H1 (cell line): ENCODE measurements at regions of chr5 and their contacts with region 1.

Region 1: GRCh38 chr5:151239237-151239861 is 13.6 kb upstream of the GM2A start:
- DNase-seq: peak in 1 of 2 experiments; percentile 89
- H3K4me3 ChIP-seq: no peak overlapping the region
- H3K27ac ChIP-seq: no peak overlapping the region
- H3K4me1 ChIP-seq: peaks cover 3 to 11% (median 7%) of the 10 kb centered on the region in 4 experiments; a peak in 6 of 7 replicates
- H3K27me3 ChIP-seq: no peaks in the 10 kb centered on the region
- CTCF ChIP-seq: peak; percentile 86 to 94 (median 87)
- EP300 ChIP-seq: no peak
- POLR2A ChIP-seq: no peak
- RAD21 ChIP-seq: peak; percentile 82 to 89

Region 2: GRCh38 chr5:151191659-151192058 is 47.7 kb before region 1 on chr5:
- CTCF ChIA-PET with region 1: interaction called, 15 read pairs
- POLR2A ChIA-PET with region 1: no interaction called
- DNase-seq: no peak
- H3K4me3 ChIP-seq: no peak overlapping the region
- H3K27ac ChIP-seq: no peak overlapping the region
- H3K4me1 ChIP-seq: no peaks in the 10 kb centered on the region; a peak in 2 of 7 replicates
- H3K27me3 ChIP-seq: no peaks in the 10 kb centered on the region
- CTCF ChIP-seq: no peak
- EP300 ChIP-seq: no peak
- POLR2A ChIP-seq: no peak
- RAD21 ChIP-seq: no peak

Region 3: DNA sequence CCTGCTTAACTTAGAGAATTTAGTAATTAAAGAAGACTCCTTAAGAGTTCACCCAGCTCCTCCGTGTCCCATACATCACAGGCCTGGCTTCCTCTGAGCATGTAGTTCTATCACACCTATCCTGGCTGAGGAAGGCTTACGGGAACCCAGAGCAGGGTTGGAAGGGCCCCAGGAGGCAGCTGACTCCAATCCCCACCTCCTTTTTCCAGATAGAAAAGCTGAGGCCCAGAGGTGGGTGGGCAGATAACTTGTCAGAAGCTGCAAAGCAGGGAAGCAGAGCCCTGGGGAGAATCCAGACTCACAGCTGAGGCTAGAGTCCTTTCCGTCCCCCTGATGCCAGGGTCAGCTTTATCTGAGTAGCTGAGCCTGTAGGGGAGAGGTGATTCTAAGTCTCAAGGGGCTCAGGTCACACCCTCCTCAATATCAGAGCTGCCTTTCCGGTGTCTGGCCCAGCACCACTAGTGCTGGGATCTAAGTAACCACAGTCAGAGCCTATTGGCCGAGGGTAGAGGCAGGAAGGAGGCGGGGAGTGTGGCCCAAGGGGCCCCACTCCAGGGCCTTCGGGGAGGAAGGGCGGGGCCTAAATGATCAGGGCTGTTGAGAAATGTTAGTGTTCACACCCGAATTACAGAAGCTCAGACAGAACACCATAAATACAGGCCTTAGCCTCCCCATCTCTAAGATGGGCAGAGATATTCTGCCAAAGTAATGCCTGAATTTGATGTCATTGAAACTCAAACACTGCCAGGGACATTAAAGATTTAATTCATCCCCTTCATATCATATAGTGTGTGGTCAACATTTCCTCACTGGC is 25.3 kb before region 1 on chr5:
- CTCF ChIA-PET with region 1: interaction called, 17 read pairs
- POLR2A ChIA-PET with region 1: no interaction called
- DNase-seq: peak in 1 of 2 experiments; percentile 58
- H3K4me3 ChIP-seq: no peak overlapping the region
- H3K27ac ChIP-seq: no peak overlapping the region
- H3K4me1 ChIP-seq: peaks cover 0 to 3% (median under 1%) of the 10 kb centered on the region in 4 experiments; a peak in 4 of 7 replicates
- H3K27me3 ChIP-seq: no peaks in the 10 kb centered on the region
- CTCF ChIP-seq: no peak
- EP300 ChIP-seq: no peak
- POLR2A ChIP-seq: peak in 1 of 2 experiments; percentile 38; a peak in 1 of 3 replicates
- RAD21 ChIP-seq: no peak

Region 4: DNA sequence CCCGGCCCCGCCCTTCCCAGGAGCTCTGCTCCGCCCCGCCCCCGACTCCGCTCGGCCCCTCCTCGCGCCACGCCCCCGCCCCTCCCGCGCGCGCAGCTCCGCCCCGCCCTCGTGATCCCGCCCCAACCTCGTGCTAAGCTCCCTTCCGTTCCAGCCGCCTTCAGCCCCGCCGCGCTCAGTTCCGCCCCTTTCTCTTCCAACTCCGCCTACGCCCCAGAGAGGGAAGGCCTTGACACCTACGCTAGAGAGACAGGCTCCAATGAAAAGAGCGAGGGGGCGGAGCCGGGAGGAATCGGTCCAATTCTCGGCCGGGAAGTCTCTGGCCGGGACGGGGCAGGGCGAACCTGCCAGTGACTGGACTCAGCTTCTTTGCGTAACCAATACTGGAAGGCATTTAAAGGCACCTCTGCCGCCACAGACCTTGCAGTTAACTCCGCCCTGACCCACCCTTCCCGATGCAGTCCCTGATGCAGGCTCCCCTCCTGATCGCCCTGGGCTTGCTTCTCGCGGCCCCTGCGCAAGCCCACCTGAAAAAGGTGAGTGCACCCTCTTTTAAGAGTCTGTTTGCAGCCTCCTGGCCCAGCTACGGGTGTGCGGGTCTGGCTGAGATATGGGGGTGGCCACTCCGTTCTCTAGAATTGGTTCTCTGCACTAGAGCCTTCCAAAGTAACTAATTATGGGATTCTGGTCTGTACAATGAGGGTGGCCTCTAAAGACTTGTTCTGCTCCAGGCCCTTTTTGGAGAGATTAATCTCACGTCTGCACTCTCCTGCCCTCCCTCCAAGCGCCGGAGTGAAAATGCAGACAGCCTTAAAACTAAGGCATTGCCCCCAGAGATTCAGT is 13.6 kb after region 1 on chr5 and contains the start of gene GM2A:
- CTCF ChIA-PET with region 1: interaction called, 36 read pairs
- POLR2A ChIA-PET with region 1: interaction called, 12 read pairs
- DNase-seq: peak; percentile 97 to 98
- H3K4me3 ChIP-seq: peak within 1 kb of the TSS; percentile 72 to 84 (median 74)
- H3K27ac ChIP-seq: peak within 1 kb of the TSS; percentile 51; the same call in 1 of the 2 replicates
- H3K4me1 ChIP-seq: peaks cover 0 to 11% (median 4%) of the 10 kb centered on the region in 4 experiments
- H3K27me3 ChIP-seq: no peaks in the 10 kb centered on the region
- CTCF ChIP-seq: no peak
- EP300 ChIP-seq: no peak
- POLR2A ChIP-seq: peak in 1 of 2 experiments; percentile 92; a peak in 2 of 3 replicates
- RAD21 ChIP-seq: no peak; a peak in 1 of 4 replicates
- total RNA-seq, gene GM2A: 30.4 and 32.2 TPM in 2 replicates

Region 5: GRCh38 chr5:151328734-151329133 is 89.4 kb after region 1 on chr5:
- CTCF ChIA-PET with region 1: no interaction called
- POLR2A ChIA-PET with region 1: no interaction called
- DNase-seq: no peak
- H3K4me3 ChIP-seq: no peak overlapping the region
- H3K27ac ChIP-seq: no peak overlapping the region
- H3K4me1 ChIP-seq: peaks cover 0 to 4% (median 2%) of the 10 kb centered on the region in 4 experiments; a peak in 2 of 7 replicates
- H3K27me3 ChIP-seq: no peaks in the 10 kb centered on the region
- CTCF ChIP-seq: no peak
- EP300 ChIP-seq: no peak
- POLR2A ChIP-seq: no peak
- RAD21 ChIP-seq: no peak

Region 6: DNA sequence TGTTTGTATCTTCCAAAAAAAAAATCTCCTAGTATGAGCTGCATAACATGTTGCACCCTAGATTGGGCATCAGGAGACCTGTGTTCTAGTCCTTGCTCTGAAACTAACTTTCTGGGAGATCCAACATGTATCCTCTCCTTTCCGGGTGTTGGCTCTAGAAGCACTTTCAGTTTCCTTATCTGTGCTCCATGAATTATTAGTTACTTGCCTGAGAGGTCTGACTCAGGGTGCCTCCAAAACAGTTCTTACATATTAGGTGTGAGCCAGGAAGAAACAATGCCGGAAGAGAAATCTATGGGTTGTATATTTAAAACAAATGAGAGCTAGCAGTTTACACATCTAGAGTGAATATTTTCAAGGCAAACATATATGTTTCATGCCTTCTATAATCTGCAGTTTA is 144.8 kb after region 1 on chr5:
- CTCF ChIA-PET with region 1: no interaction called
- POLR2A ChIA-PET with region 1: no interaction called
- DNase-seq: no peak
- H3K4me3 ChIP-seq: no peak overlapping the region
- H3K27ac ChIP-seq: no peak overlapping the region
- H3K4me1 ChIP-seq: peaks cover 5 to 22% (median 18%) of the 10 kb centered on the region in 4 experiments
- H3K27me3 ChIP-seq: no peaks in the 10 kb centered on the region
- CTCF ChIP-seq: no peak
- EP300 ChIP-seq: no peak
- POLR2A ChIP-seq: no peak
- RAD21 ChIP-seq: no peak

Region 7: DNA sequence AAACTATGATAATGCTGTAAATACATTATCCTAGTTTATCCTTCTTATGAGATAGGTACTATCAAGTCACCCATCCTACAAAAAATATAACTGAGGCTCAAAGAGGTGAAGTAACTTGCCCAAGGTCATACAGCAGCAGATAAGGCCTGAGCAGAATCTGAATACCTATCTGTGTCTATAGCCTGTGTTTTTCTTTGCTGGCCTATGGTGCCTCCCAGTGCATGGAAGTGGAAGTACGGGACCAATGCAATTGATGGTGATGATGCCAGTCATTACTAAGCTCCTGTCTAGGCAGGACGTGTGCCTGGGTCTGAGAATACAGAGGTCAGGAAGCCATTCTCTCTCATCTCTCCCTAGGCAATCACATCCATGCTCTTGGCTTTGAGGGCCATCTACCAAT is 284.0 kb after region 1 on chr5:
- CTCF ChIA-PET with region 1: no interaction called
- POLR2A ChIA-PET with region 1: no interaction called
- DNase-seq: peak; percentile 15 to 69
- H3K4me3 ChIP-seq: no peak overlapping the region
- H3K27ac ChIP-seq: no peak overlapping the region
- H3K4me1 ChIP-seq: no peaks in the 10 kb centered on the region
- H3K27me3 ChIP-seq: no peaks in the 10 kb centered on the region
- CTCF ChIP-seq: peak; percentile 62 to 94 (median 89)
- EP300 ChIP-seq: no peak
- POLR2A ChIP-seq: no peak
- RAD21 ChIP-seq: peak; percentile 95 to 97